Activated CD8-positive, alpha-beta T cell treated with anti-CD3 and anti-CD28 coated beads for 36 hours (primary cell): ENCODE measurements at regions of chr6 and their contacts with region 1.

Region 1: DNA sequence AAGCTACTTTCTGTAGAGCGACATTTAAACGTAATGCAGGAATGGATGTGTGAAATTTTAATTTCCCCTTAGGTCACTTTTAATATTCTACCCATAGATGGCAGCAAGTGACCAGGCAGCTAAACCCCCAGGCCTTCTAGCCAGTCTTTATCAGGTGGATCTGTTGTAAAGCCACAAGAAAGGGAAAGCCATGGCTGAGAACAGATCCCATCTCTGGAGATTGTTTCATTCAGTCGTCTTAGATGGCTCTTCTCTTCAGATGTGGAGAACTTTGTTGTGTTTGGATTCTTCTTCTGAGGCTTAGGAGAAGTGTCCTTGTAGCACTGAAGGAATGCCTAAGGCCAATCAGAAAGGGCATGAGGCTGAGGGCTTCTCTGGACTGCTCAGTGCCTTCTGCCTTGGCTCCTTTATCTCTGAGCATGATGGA is 15.8 kb upstream of the RNF182 start:
- DNase-seq: peak; percentile 49
- ATAC-seq: peak; percentile 79
- H3K4me3 Mint-ChIP-seq: no peak overlapping the region
- H3K27ac Mint-ChIP-seq: no peak overlapping the region
- H3K4me1 Mint-ChIP-seq: no peaks in the 10 kb centered on the region
- H3K27me3 Mint-ChIP-seq: peaks cover 29% of the 10 kb centered on the region
- CTCF ChIP-seq: peak; percentile 71

Region 2: GRCh38 chr6:13795041-13795750 is 113.8 kb before region 1 on chr6:
- CTCF ChIA-PET with region 1: interaction called, 13 read pairs
- POLR2A ChIA-PET with region 1: no interaction called
- intact Hi-C with region 1: no loop called
- DNase-seq: peak; percentile 95
- ATAC-seq: peak; percentile 97
- H3K4me3 Mint-ChIP-seq: no peak overlapping the region
- H3K27ac Mint-ChIP-seq: peak overlapping the region; percentile 38
- H3K4me1 Mint-ChIP-seq: peaks cover 17% of the 10 kb centered on the region
- H3K27me3 Mint-ChIP-seq: no peaks in the 10 kb centered on the region
- CTCF ChIP-seq: peak; percentile 89

Region 3: GRCh38 chr6:13924146-13924948 is 15.4 kb after region 1 on chr6:
- CTCF ChIA-PET with region 1: interaction called, 25 read pairs
- POLR2A ChIA-PET with region 1: no interaction called
- intact Hi-C with region 1: no loop called
- DNase-seq: peak; percentile 57
- ATAC-seq: peak; percentile 29
- H3K4me3 Mint-ChIP-seq: peak overlapping the region; percentile 66
- H3K27ac Mint-ChIP-seq: no peak overlapping the region
- H3K4me1 Mint-ChIP-seq: peaks cover 14% of the 10 kb centered on the region
- H3K27me3 Mint-ChIP-seq: peaks cover 53% of the 10 kb centered on the region
- CTCF ChIP-seq: no peak

Region 4: GRCh38 chr6:13993416-13993815 is 84.4 kb after region 1 on chr6:
- CTCF ChIA-PET with region 1: no interaction called
- POLR2A ChIA-PET with region 1: no interaction called
- intact Hi-C with region 1: no loop called
- DNase-seq: no peak
- ATAC-seq: no peak
- H3K4me3 Mint-ChIP-seq: no peak overlapping the region
- H3K27ac Mint-ChIP-seq: no peak overlapping the region
- H3K4me1 Mint-ChIP-seq: no peaks in the 10 kb centered on the region
- H3K27me3 Mint-ChIP-seq: peaks cover 22% of the 10 kb centered on the region
- CTCF ChIP-seq: no peak

Region 5: GRCh38 chr6:14037402-14038277 is 128.7 kb after region 1 on chr6:
- CTCF ChIA-PET with region 1: interaction called, 11 read pairs
- POLR2A ChIA-PET with region 1: no interaction called
- intact Hi-C with region 1: no loop called
- DNase-seq: no peak
- ATAC-seq: no peak
- H3K4me3 Mint-ChIP-seq: no peak overlapping the region
- H3K27ac Mint-ChIP-seq: no peak overlapping the region
- H3K4me1 Mint-ChIP-seq: peaks cover 1% of the 10 kb centered on the region
- H3K27me3 Mint-ChIP-seq: peaks cover 9% of the 10 kb centered on the region
- CTCF ChIP-seq: no peak

Region 6: GRCh38 chr6:14046476-14047068 is 137.6 kb after region 1 on chr6:
- CTCF ChIA-PET with region 1: interaction called, 68 read pairs
- POLR2A ChIA-PET with region 1: no interaction called
- intact Hi-C with region 1: loop called (anchors 5 kb)
- DNase-seq: peak; percentile 61
- ATAC-seq: peak; percentile 89
- H3K4me3 Mint-ChIP-seq: no peak overlapping the region
- H3K27ac Mint-ChIP-seq: no peak overlapping the region
- H3K4me1 Mint-ChIP-seq: peaks cover 4% of the 10 kb centered on the region
- H3K27me3 Mint-ChIP-seq: peaks cover 19% of the 10 kb centered on the region
- CTCF ChIP-seq: peak; percentile 69

Region 7: DNA sequence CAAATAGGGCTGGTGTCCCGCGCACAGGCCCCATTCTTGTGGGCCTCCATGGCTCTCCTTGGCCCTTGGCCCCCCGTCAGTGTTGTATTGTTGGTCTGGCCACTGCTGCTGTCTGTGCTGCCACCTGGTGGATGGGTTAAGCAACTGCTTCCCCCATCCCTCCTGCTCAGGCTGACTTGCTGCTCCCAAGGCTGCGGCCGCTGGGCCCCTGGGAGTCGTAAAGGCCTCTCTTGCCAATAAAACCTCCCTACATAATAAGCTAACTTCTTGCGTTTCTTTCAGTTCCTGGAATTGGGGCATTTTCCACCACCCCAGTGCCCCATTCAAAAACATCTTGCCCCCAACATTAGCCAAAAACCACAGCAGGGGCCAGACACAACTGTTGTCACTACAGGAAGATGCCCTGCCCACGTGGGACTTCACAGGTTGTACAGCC is 235.7 kb after region 1 on chr6:
- CTCF ChIA-PET with region 1: interaction called, 10 read pairs
- POLR2A ChIA-PET with region 1: no interaction called
- intact Hi-C with region 1: loop called (anchors 2 kb)
- DNase-seq: peak; percentile 74
- ATAC-seq: peak; percentile 99
- H3K4me3 Mint-ChIP-seq: no peak overlapping the region
- H3K27ac Mint-ChIP-seq: no peak overlapping the region
- H3K4me1 Mint-ChIP-seq: peaks cover 4% of the 10 kb centered on the region
- H3K27me3 Mint-ChIP-seq: no peaks in the 10 kb centered on the region
- CTCF ChIP-seq: peak; percentile 94